AG04449 (cell line): ENCODE measurements at regions of chr21 and their contacts with region 1.

Region 1: DNA sequence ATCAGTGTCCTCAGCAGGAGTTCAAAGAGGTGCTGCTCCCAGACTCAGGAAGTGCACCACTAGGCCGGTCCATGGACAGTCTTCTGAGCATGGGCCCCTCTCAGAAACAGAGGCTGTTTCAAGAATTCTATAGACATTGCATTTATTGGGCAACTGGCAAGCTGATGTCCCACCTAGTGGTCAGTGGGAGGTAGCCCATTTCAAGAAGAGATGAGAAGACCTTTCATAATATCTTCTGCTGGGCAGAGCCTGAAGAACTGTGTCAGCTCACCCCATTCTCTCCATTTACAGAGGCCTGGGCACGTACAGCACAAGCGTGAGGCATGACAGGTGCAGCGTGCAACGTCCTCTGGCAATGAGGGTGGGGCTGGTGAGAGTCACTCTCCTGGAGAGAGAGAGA is 216.0 kb downstream of the DYRK1A start:
- DNase-seq: peak; percentile 17
- H3K4me3 ChIP-seq: no peak overlapping the region
- CTCF ChIP-seq: peak; percentile 77

Region 2: DNA sequence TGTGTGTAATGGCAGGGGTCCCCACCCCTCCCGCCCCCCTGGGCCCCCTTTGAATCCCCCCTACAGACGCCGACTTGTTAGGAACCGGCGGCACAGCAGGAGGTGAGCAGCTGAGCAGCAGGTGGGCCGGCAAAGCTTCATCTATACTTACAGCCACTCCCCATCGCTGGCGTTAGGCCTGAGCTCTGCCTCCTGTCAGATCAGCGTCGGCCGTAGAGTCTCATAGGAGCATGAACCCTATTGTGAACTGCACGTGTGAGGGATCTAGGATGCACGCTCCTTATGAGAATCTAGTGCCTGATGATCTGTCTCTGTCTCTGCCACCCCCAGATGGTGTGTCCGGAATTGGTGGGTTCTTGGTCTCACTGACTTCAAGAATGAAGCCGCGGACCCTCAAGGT is 300.6 kb before region 1 on chr21:
- CTCF ChIA-PET with region 1: no interaction called
- POLR2A ChIA-PET with region 1: no interaction called
- DNase-seq: no peak
- H3K4me3 ChIP-seq: no peak overlapping the region; the same call in 1 of the 2 replicates
- CTCF ChIP-seq: no peak

Region 3: DNA sequence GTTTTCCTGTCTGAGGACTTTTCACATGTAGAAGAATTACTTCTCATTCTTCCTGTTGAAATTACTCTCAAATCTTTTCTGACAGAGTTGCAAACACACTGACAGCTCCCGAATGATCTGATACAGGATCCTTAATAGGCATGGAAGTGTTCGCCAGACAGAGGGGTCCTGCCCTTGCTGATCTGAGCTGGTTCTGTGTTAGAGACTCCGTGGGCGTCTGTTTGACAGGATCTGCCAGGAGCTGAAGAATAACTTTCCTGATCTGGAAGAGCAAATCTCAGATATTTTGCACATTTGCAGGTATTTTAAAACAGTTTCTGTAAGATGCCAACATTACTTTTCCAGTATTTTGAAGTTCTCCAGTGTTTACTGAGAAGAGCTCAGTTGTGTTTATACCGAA is 13.7 kb before region 1 on chr21:
- CTCF ChIA-PET with region 1: interaction called, 10 read pairs
- POLR2A ChIA-PET with region 1: no interaction called
- DNase-seq: no peak
- H3K4me3 ChIP-seq: no peak overlapping the region
- CTCF ChIP-seq: no peak

Region 4: DNA sequence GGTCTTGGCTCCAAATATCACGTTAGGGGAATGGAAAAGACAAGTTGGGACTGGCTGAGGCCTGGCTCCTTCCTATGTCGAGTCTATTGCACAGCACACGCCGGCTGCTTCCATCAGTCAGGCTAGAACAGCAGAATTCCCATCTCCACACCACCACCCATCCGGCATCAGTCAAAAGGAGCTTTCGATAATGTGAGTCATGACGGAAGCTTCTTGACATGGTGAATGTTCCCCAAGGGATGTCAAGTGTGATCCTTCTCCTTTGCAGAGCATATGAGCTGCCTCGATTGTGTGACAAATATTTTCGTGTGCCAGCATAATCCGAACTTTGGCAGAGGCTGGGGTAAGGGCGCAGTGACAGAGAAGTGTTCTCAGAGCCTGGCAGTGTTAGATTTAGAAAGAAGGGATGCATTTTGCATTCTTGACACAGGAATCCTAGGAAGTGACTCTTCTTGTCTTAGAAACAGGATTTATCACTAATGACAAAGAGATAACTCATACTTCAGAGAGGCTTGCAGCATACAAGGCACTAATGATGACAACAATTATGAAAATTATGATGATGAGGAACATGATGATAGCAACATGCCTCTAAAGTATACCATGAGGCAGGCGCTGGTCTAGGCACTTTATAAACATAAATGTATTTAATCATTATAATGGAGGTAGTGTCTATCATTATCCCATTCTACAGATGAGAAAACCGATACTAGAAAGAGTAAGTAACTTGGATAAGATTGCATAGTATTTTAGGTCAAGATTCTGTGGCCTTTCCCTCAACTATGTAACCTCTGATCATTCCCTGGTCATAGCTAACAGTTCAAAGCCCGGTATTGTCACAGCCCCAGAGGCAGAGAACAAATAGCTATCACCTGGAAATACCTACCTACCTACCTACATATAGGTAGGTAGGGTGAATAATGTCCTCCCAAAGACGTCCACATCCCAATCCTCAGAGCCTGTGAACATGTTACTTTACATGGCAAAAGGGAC is 198.7 kb after region 1 on chr21:
- CTCF ChIA-PET with region 1: no interaction called
- POLR2A ChIA-PET with region 1: no interaction called
- DNase-seq: no peak
- H3K4me3 ChIP-seq: no peak overlapping the region
- CTCF ChIP-seq: no peak